MCF 10A (cell line): ENCODE measurements at regions of chr1 and their contacts with region 1.

Region 1: GRCh38 chr1:205523891-205524793 is 19.7 kb downstream of the CDK18 start:
- DNase-seq: peak; percentile 95
- H3K4me3 Mint-ChIP-seq: no peak overlapping the region
- H3K27ac Mint-ChIP-seq: no peak overlapping the region
- H3K4me1 Mint-ChIP-seq: no peaks in the 10 kb centered on the region
- H3K27me3 Mint-ChIP-seq: no peaks in the 10 kb centered on the region
- CTCF ChIP-seq: peak; percentile 99

Region 2: GRCh38 chr1:205346956-205347576 is 177.1 kb before region 1 on chr1:
- CTCF ChIA-PET with region 1: interaction called, 130 read pairs
- POLR2A ChIA-PET with region 1: no interaction called
- intact Hi-C with region 1: no loop called
- DNase-seq: no peak
- H3K4me3 Mint-ChIP-seq: no peak overlapping the region
- H3K27ac Mint-ChIP-seq: no peak overlapping the region
- H3K4me1 Mint-ChIP-seq: peaks cover 7% of the 10 kb centered on the region
- H3K27me3 Mint-ChIP-seq: peaks cover 12% of the 10 kb centered on the region
- CTCF ChIP-seq: no peak

Region 3: GRCh38 chr1:205416322-205416721 is 107.8 kb before region 1 on chr1:
- CTCF ChIA-PET with region 1: interaction called, 10 read pairs
- POLR2A ChIA-PET with region 1: interaction called, 3 read pairs
- intact Hi-C with region 1: no loop called
- DNase-seq: no peak
- H3K4me3 Mint-ChIP-seq: no peak overlapping the region
- H3K27ac Mint-ChIP-seq: no peak overlapping the region
- H3K4me1 Mint-ChIP-seq: no peaks in the 10 kb centered on the region
- H3K27me3 Mint-ChIP-seq: peaks cover 40% of the 10 kb centered on the region
- CTCF ChIP-seq: no peak

Region 4: DNA sequence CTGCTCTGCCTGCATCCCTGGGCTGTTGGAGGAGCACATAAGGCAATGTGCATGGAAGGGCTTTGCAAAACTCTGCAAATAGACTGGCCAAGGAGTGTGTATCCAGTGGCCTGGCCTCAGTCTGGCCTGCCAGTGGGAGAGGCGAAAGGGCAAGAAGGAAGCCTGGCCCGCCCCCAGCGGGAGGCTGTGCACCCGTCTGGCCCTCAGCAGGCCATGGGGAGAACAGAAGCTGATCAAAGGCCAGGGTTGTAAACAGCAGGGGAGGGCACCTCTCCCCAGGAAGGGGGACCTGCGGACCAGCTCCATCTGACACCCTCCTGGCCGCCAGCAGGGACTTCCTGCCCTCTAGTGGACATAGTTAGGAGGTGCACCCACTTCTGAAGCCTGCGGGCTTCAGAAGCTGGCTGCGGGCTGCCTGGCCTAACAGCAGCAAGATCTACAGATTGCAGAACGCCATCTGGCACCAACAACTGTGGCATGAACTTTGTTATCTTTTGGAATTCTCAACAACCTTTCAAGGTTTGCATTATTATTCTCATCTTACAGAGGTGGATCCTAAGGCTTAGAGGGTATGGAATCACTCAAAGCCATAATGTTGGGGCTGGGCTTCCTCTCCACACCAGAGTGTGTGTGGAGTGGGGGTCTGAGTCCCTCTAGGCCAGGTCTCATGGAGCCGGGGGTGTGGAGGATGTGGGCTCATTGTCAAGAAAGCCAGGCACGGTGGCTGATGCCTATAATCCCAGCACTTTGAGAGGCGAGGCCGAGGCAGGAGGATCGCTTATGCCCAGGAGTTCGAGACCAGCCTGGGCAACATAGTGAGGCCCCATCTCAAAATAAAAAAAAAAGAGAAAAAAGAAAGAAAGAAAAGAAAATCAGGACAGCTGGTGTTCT is 38.6 kb before region 1 on chr1:
- CTCF ChIA-PET with region 1: interaction called, 1,608 read pairs
- POLR2A ChIA-PET with region 1: interaction called, 70 read pairs
- intact Hi-C with region 1: loop called (anchors 1 kb)
- DNase-seq: peak; percentile 88
- H3K4me3 Mint-ChIP-seq: no peak overlapping the region
- H3K27ac Mint-ChIP-seq: no peak overlapping the region
- H3K4me1 Mint-ChIP-seq: peaks cover 14% of the 10 kb centered on the region
- H3K27me3 Mint-ChIP-seq: peaks cover 42% of the 10 kb centered on the region
- CTCF ChIP-seq: peak; percentile 100

Region 5: GRCh38 chr1:205543411-205544301 is 19.5 kb after region 1 on chr1:
- CTCF ChIA-PET with region 1: interaction called, 90 read pairs
- POLR2A ChIA-PET with region 1: interaction called, 5 read pairs
- intact Hi-C with region 1: no loop called
- DNase-seq: peak; percentile 99
- H3K4me3 Mint-ChIP-seq: peak overlapping the region; percentile 66
- H3K27ac Mint-ChIP-seq: peak overlapping the region; percentile 58
- H3K4me1 Mint-ChIP-seq: peaks cover 9% of the 10 kb centered on the region
- H3K27me3 Mint-ChIP-seq: peaks cover 7% of the 10 kb centered on the region
- CTCF ChIP-seq: no peak

Region 6: GRCh38 chr1:205631727-205632373 is 107.7 kb after region 1 on chr1 and contains the start of gene ELK4:
- CTCF ChIA-PET with region 1: interaction called, 19 read pairs
- POLR2A ChIA-PET with region 1: interaction called, 8 read pairs
- intact Hi-C with region 1: loop called (anchors 1 kb)
- DNase-seq: peak; percentile 100
- H3K4me3 Mint-ChIP-seq: peak within 1 kb of the TSS; percentile 90
- H3K27ac Mint-ChIP-seq: peak within 1 kb of the TSS; percentile 91
- H3K4me1 Mint-ChIP-seq: peaks cover 35% of the 10 kb centered on the region
- H3K27me3 Mint-ChIP-seq: no peaks in the 10 kb centered on the region
- CTCF ChIP-seq: peak; percentile 87
- total RNA-seq, gene ELK4: 101 and 109 TPM in 2 replicates